ENCODE measurements at regions of chr4 and their contacts with region 1.

Region 1: DNA sequence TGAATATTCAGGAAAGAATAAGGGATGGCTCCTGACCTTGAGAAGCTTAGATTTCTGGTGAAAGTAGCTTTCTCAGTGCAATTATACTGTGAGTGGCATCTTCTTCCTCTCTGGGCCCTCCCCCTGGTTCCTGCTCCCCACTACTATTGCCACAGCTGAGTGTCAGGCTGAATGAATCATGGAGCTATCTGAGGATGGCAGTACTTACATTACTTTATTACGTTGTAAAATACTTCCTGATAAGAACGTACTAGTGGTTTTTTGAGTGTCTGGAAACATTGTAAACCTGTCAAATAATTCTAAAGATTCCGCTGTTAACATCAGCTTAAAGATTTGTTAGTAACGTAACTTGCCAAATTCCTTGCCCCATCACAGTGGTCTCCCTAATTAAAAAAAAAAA is 36.2 kb downstream of the ARHGAP10 start:
- DNase-seq: peak; percentile 95
- H3K4me3 ChIP-seq: no peak overlapping the region
- H3K27ac ChIP-seq: peak overlapping the region; percentile 62
- H3K4me1 ChIP-seq: peaks cover 51% of the 10 kb centered on the region
- H3K27me3 ChIP-seq: no peaks in the 10 kb centered on the region
- CTCF ChIP-seq: no peak
- POLR2A ChIP-seq: no peak

Region 2: DNA sequence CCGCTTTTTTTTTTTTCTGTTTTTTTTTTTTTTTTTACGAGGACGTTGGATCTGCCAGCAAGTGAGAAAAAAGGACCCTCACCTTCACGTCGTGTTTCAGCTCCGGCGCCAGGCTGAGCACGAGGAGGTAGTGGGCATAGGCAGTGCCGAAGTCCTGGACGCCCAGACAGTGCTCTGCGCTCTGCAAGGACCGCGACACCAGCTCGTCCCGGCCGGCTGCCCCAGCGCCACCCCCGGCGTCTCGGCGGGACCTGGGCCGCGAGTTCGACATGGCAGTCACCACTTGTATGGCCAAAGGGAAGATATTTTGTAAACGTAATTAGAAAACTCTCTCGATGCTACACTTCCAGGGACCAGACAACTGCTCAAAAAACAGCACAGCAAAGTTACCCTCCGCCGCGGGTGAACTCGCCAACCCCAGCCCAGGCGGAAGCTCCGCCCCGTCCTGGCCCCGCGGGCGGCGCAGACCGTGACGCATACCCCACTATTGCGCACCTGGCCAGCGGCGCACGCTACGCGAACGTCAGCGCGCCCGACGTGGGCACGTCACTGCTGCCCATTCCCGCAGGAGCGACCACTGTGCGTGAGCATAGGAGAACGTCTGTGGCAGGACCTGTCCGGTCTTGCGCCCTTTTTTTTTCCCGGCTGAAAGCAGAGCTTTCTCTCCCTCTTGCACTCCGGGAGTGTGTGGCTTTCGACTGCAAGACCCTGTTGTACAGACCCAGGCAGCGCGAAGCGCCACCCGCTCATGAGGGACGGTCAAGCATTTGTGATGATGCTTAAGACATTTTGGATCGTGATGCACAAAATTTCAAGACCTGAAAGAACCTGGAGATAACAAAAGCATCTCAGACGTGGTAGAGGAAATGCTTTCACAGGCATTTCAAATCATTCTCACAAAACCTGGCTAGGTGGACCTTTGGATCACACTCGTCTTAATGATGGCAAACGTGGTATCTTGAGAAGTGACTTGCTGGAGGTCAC is 84.1 kb before region 1 on chr4 and contains the start of gene PRMT9:
- CTCF ChIA-PET with region 1: interaction called, 3 read pairs
- POLR2A ChIA-PET with region 1: no interaction called
- dilution Hi-C with region 1: no loop called
- intact Hi-C with region 1: loop called (anchors 1 kb)
- DNase-seq: peak; percentile 93
- H3K4me3 ChIP-seq: peak within 1 kb of the TSS; percentile 47 to 85 (median 80)
- H3K27ac ChIP-seq: peak within 1 kb of the TSS; percentile 78
- H3K4me1 ChIP-seq: peaks cover 15% of the 10 kb centered on the region
- H3K27me3 ChIP-seq: no peaks in the 10 kb centered on the region
- CTCF ChIP-seq: no peak
- POLR2A ChIP-seq: peak; percentile 99
- total RNA-seq, gene PRMT9: 8.2 and 9.0 TPM in 2 replicates

Region 3: DNA sequence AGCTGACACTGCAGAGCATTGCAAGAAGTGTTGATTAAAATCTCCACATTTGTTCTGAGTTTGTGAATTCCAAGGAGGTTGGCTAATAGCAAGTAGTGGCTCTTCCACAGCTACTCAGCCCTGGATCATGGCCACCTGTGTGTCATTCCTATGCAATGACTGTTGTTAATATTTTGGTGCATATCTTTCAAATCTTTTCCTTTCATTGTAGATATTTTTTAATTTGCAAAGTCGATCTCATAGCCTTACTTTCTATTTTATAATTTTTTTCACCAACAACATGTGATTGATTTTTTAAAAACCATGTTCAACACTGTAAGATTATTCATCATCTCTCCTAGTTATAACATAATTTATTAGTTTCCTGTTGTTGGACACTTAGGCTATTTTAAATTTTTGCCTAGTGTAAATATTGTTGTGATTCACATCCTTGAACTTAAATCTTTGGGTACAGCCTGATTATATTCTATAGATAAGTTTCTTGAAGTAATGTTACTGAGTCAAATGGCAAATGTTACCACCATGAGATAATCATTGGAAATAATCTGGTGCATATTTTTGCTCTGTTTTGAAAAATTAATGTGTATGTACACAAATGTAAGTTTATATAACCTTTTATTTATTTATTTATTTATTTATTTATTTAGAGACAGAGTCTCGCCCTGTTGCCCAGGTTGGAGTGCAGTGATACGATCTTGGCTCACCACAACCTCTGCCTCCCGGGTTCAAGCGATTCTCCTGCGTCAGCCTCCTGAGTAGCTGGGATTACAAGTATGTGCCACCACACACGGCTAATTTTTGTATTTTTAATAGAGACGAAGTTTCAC is 53.3 kb before region 1 on chr4:
- CTCF ChIA-PET with region 1: no interaction called
- POLR2A ChIA-PET with region 1: no interaction called
- dilution Hi-C with region 1: no loop called
- intact Hi-C with region 1: loop called (anchors 1 kb)
- DNase-seq: peak; percentile 81
- H3K4me3 ChIP-seq: peak overlapping the region in 1 of 3 experiments; percentile 50
- H3K27ac ChIP-seq: peak overlapping the region; percentile 71
- H3K4me1 ChIP-seq: peaks cover 16% of the 10 kb centered on the region
- H3K27me3 ChIP-seq: no peaks in the 10 kb centered on the region
- CTCF ChIP-seq: no peak
- POLR2A ChIP-seq: no peak

Region 4: GRCh38 chr4:147731580-147732517 is 36.3 kb before region 1 on chr4 and contains the start of gene ARHGAP10:
- CTCF ChIA-PET with region 1: interaction called, 12 read pairs
- POLR2A ChIA-PET with region 1: interaction called, 8 read pairs
- dilution Hi-C with region 1: no loop called
- intact Hi-C with region 1: loop called (anchors 1 kb)
- DNase-seq: peak; percentile 78
- H3K4me3 ChIP-seq: peak within 1 kb of the TSS; percentile 72 to 81 (median 79)
- H3K27ac ChIP-seq: peak within 1 kb of the TSS; percentile 83
- H3K4me1 ChIP-seq: peaks cover 42% of the 10 kb centered on the region
- H3K27me3 ChIP-seq: no peaks in the 10 kb centered on the region
- CTCF ChIP-seq: no peak
- POLR2A ChIP-seq: peak; percentile 86
- total RNA-seq, gene ARHGAP10: 36.7 and 39.1 TPM in 2 replicates

Region 5: GRCh38 chr4:147755561-147756295 is 12.4 kb before region 1 on chr4:
- CTCF ChIA-PET with region 1: interaction called, 9 read pairs
- POLR2A ChIA-PET with region 1: interaction called, 3 read pairs
- dilution Hi-C with region 1: no loop called
- intact Hi-C with region 1: loop called (anchors 1 kb)
- DNase-seq: no peak
- H3K4me3 ChIP-seq: no peak overlapping the region
- H3K27ac ChIP-seq: no peak overlapping the region
- H3K4me1 ChIP-seq: peaks cover 11% of the 10 kb centered on the region
- H3K27me3 ChIP-seq: no peaks in the 10 kb centered on the region
- CTCF ChIP-seq: no peak
- POLR2A ChIP-seq: no peak

Region 6: GRCh38 chr4:147786031-147786430 is 17.9 kb after region 1 on chr4:
- CTCF ChIA-PET with region 1: interaction called, 19 read pairs
- POLR2A ChIA-PET with region 1: no interaction called
- dilution Hi-C with region 1: no loop called
- intact Hi-C with region 1: no loop called
- DNase-seq: no peak
- H3K4me3 ChIP-seq: no peak overlapping the region
- H3K27ac ChIP-seq: no peak overlapping the region
- H3K4me1 ChIP-seq: peaks cover 7% of the 10 kb centered on the region
- H3K27me3 ChIP-seq: no peaks in the 10 kb centered on the region
- CTCF ChIP-seq: no peak
- POLR2A ChIP-seq: no peak

Region 7: GRCh38 chr4:147831551-147832177 is 63.6 kb after region 1 on chr4:
- CTCF ChIA-PET with region 1: interaction called, 5 read pairs
- POLR2A ChIA-PET with region 1: interaction called, 3 read pairs
- dilution Hi-C with region 1: no loop called
- intact Hi-C with region 1: loop called (anchors 1 kb)
- DNase-seq: peak; percentile 88
- H3K4me3 ChIP-seq: peak overlapping the region in 1 of 3 experiments; percentile 37
- H3K27ac ChIP-seq: peak overlapping the region; percentile 99
- H3K4me1 ChIP-seq: peaks cover 30% of the 10 kb centered on the region
- H3K27me3 ChIP-seq: no peaks in the 10 kb centered on the region
- CTCF ChIP-seq: no peak
- POLR2A ChIP-seq: no peak

Measured in endothelial cell of umbilical vein (primary cell).